ENCODE measurements at regions of chr12 and their contacts with region 1.

Region 1: DNA sequence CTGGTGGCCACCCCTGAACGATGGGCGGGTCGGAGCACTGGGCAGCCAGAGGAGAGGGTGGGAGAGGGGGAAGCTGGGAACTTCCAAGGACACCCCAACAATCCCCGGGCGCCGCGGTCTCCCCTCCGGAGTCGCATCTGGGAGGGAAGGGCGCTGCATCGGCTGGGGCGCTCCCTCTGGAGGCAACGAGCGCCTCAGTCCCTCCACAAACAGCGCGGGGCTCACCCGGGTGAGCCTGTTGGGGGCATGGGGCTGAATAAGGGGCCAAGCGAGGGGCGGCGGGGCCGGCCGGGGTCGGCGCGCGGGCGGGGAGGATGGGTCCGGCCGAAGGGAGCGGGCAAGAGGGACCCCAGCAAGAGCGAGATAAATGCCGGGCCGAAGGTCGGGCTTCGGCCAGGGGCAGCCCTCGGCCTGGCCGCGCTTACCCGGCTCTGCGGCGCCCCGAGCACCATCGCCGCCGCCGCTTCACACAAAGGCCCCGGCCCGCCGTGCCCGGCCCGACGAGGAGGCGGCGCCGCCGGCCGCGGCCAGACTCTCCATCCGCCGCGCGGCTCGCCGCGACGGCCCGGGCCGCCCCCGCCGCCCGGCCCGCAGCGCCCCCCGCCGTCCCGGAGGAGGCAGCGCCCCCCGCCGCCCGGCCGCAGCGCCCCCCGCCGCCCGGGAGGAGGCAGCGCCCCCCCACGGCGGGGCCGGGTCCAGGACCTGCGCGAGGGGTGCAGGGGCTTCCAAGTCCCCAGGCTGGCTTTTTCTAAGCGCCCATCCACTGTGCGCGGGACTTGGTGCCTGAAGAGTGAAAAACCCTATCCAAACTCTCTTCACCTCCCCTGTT is at the start of gene ZBTB39:
- DNase-seq: peak; percentile 67
- H3K4me3 Mint-ChIP-seq: peak within 1 kb of the TSS; percentile 84
- H3K27ac Mint-ChIP-seq: peak within 1 kb of the TSS; percentile 65
- H3K4me1 Mint-ChIP-seq: peaks cover 40% of the 10 kb centered on the region
- H3K27me3 Mint-ChIP-seq: no peaks in the 10 kb centered on the region
- total RNA-seq, gene ZBTB39: 7.7 to 7.8 TPM

Region 2: GRCh38 chr12:56751712-56752598 is 254.2 kb before region 1 on chr12 and contains the start of gene PRIM1:
- CTCF ChIA-PET with region 1: interaction called, 66 read pairs
- POLR2A ChIA-PET with region 1: interaction called, 5 read pairs
- DNase-seq: peak; percentile 89
- H3K4me3 Mint-ChIP-seq: peak within 1 kb of the TSS; percentile 99
- H3K27ac Mint-ChIP-seq: peak within 1 kb of the TSS; percentile 97
- H3K4me1 Mint-ChIP-seq: peaks cover 50% of the 10 kb centered on the region
- H3K27me3 Mint-ChIP-seq: no peaks in the 10 kb centered on the region
- total RNA-seq, gene PRIM1: 45.0 to 46.2 TPM

Region 3: GRCh38 chr12:56759263-56759908 is 246.8 kb before region 1 on chr12:
- CTCF ChIA-PET with region 1: interaction called, 66 read pairs
- POLR2A ChIA-PET with region 1: interaction called, 5 read pairs
- DNase-seq: no peak
- H3K4me3 Mint-ChIP-seq: no peak overlapping the region
- H3K27ac Mint-ChIP-seq: no peak overlapping the region
- H3K4me1 Mint-ChIP-seq: peaks cover 17% of the 10 kb centered on the region
- H3K27me3 Mint-ChIP-seq: peaks cover 4% of the 10 kb centered on the region

Region 4: GRCh38 chr12:56987551-56988053 is 18.6 kb before region 1 on chr12:
- CTCF ChIA-PET with region 1: interaction called, 51 read pairs
- POLR2A ChIA-PET with region 1: no interaction called
- DNase-seq: peak; percentile 78
- H3K4me3 Mint-ChIP-seq: no peak overlapping the region
- H3K27ac Mint-ChIP-seq: no peak overlapping the region
- H3K4me1 Mint-ChIP-seq: peaks cover 23% of the 10 kb centered on the region
- H3K27me3 Mint-ChIP-seq: peaks cover 6% of the 10 kb centered on the region

Region 5: DNA sequence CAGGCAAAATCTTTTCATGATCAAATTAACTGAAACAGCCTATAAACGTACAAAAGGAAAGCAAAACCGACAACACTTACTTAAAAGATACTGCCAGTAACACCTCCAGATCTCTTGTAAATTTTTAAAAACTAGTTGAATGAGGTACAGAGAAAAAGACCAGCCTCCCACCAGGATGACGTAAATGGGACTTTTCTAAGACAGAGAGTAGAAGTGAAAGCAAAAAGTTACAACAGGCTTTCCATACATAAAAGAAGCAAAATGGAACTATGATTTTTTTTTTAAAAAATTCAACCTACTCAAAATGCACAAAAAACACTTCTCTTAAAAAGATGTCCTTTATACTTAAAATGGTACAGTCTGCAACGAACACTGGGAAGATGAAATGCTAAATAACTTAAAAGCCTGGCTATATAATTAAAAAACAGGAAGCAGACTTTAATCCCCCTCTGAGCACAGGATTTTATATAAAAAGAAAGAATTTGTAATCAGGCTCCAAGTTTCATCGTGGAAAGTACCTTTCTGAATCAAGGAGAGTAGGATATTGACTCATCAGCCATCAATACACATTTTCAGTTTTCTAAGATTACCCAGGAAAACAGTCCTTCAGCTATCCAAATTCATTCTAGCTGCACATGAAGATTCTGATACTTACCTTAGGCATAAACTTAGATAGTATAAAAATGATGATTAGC is 57.9 kb after region 1 on chr12:
- CTCF ChIA-PET with region 1: interaction called, 10 read pairs
- POLR2A ChIA-PET with region 1: interaction called, 3 read pairs
- DNase-seq: peak; percentile 54
- H3K4me3 Mint-ChIP-seq: peak overlapping the region; percentile 62
- H3K27ac Mint-ChIP-seq: peak overlapping the region; percentile 89
- H3K4me1 Mint-ChIP-seq: peaks cover 35% of the 10 kb centered on the region
- H3K27me3 Mint-ChIP-seq: no peaks in the 10 kb centered on the region

Measured in activated CD4-positive, alpha-beta memory T cell treated with anti-CD3 and anti-CD28 coated beads, Interleukin-2, amount 10 ng/mL, durations not matched to agents 7 days and 5 days (primary cell).